Activated T-helper 1 cell treated with anti-CD3 and anti-CD28 coated beads, Interleukin-12 subunit alpha, Interleukin-12 subunit beta, Interleukin-2, Interleukin-4 antibody, amounts not matched to agents 30 ng/mL and 10 ng/mL and 1 ng/mL, durations not matched to agents 14 hours and 24 hours and 36 hours (primary cell): ENCODE measurements at regions of chr11 and their contacts with region 1.

Region 1: GRCh38 chr11:73963861-73964260 is 13.0 kb downstream of the DNAJB13 start:
- DNase-seq: no peak
- H3K4me3 Mint-ChIP-seq: no peak overlapping the region
- H3K27ac Mint-ChIP-seq: peak overlapping the region; percentile 78
- H3K4me1 Mint-ChIP-seq: peaks cover 28% of the 10 kb centered on the region
- H3K27me3 Mint-ChIP-seq: peaks cover 2% of the 10 kb centered on the region

Region 2: DNA sequence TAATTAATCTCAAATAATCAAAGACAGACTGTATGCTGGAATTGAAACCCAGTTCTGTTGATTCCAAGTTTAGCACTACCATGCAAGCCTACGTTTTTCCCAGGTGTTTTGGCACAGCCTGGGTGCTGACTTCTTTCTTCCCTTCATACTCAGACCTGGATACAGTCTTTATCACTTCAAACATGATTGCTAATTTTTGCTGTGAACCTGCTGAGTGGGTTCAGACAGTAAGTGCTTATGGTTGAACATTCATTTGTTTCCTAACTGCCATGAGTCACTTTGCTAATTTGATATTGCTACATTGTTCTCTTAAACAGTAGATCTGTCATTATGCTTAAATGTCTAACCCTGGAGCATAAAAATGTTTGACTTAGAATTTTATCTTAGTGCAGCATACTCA is 74.8 kb before region 1 on chr11:
- intact Hi-C with region 1: no loop called
- DNase-seq: no peak
- H3K4me3 Mint-ChIP-seq: no peak overlapping the region
- H3K27ac Mint-ChIP-seq: no peak overlapping the region
- H3K4me1 Mint-ChIP-seq: no peaks in the 10 kb centered on the region
- H3K27me3 Mint-ChIP-seq: no peaks in the 10 kb centered on the region

Region 3: GRCh38 chr11:74011360-74012073 is 47.7 kb after region 1 on chr11:
- intact Hi-C with region 1: loop called (anchors 1 kb)
- DNase-seq: peak; percentile 57
- H3K4me3 Mint-ChIP-seq: peak overlapping the region; percentile 55
- H3K27ac Mint-ChIP-seq: peak overlapping the region; percentile 99
- H3K4me1 Mint-ChIP-seq: peaks cover 91% of the 10 kb centered on the region
- H3K27me3 Mint-ChIP-seq: no peaks in the 10 kb centered on the region

Region 4: DNA sequence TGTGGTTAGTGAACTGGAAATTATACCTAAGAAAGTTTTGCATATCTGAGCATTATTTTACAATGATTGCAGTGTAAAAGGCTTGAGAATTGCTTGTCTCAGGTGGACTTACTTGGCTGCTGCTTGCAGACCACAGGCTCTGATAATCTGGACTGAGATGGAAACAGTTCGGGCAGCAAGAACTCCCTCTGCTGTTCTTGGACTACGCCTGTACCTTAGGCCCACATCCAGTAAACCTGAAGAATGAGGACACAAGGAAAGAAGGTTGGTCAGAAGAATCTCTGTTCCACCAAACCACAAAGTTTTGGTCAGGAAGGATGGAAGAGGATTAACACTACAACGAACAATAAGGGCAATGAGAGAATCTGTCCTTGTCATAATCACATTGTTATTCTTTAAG is 126.8 kb after region 1 on chr11:
- intact Hi-C with region 1: loop called (anchors 1 kb)
- DNase-seq: no peak
- H3K4me3 Mint-ChIP-seq: no peak overlapping the region
- H3K27ac Mint-ChIP-seq: no peak overlapping the region
- H3K4me1 Mint-ChIP-seq: no peaks in the 10 kb centered on the region
- H3K27me3 Mint-ChIP-seq: no peaks in the 10 kb centered on the region

Region 5: GRCh38 chr11:74255741-74256369 is 292.0 kb after region 1 on chr11:
- intact Hi-C with region 1: loop called (anchors 1 kb)
- DNase-seq: peak; percentile 35
- H3K4me3 Mint-ChIP-seq: no peak overlapping the region
- H3K27ac Mint-ChIP-seq: no peak overlapping the region
- H3K4me1 Mint-ChIP-seq: peaks cover 5% of the 10 kb centered on the region
- H3K27me3 Mint-ChIP-seq: peaks cover 2% of the 10 kb centered on the region

Region 6: GRCh38 chr11:74321487-74322188 is 357.8 kb after region 1 on chr11:
- intact Hi-C with region 1: loop called (anchors 1 kb)
- DNase-seq: no peak
- H3K4me3 Mint-ChIP-seq: no peak overlapping the region
- H3K27ac Mint-ChIP-seq: no peak overlapping the region
- H3K4me1 Mint-ChIP-seq: no peaks in the 10 kb centered on the region
- H3K27me3 Mint-ChIP-seq: peaks cover 19% of the 10 kb centered on the region